ENCODE measurements at regions of chr22 and their contacts with region 1.

Region 1: DNA sequence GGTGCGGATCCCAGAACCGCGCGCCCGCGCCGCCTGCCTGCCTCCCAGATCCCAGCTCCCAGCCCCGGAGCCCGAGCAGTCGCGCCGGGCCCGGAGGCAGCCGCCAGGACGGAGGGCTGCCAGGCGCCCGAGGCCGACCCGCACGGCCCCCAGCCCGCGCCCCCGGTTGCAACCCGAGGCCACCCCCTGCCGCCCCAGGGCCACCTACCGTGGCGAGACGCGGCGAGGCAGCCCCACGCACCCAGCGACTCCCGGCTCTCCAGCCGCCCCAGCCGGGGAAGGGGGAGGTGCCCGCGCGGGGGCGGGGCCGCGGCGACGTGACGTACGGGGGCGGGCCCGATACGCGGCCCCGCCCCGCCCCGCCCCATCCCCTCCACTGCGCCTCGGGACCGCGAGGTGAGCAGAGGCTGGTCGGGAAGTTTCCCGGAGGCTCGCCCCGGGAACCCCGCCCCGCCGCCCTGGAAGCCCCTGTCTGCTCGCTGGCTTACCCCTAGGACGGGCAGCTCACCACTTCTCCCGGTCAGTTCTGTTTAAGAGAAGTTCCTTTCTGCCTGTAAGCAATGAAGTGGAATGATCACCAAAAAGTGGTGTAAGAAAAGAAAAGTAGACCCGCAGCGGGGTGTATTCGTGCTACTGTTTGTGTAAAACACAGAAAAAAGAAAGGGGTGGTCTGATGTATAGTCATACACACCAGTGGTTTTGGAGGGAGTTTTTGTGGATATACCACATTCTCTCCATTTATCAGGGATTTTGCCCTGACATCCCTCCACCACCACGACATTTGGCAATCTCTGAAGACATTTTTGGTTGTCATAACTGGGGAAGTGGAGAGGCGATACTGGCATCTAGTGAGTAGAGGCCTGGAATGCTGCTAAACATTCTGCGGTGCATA is at the start of gene TPST2:
- DNase-seq: peak; percentile 72
- H3K4me3 Mint-ChIP-seq: peak within 1 kb of the TSS; percentile 85
- H3K27ac Mint-ChIP-seq: peak within 1 kb of the TSS; percentile 67
- H3K4me1 Mint-ChIP-seq: peaks cover 49% of the 10 kb centered on the region
- H3K27me3 Mint-ChIP-seq: no peaks in the 10 kb centered on the region
- total RNA-seq, gene TPST2: 21.0 to 21.9 TPM

Region 2: DNA sequence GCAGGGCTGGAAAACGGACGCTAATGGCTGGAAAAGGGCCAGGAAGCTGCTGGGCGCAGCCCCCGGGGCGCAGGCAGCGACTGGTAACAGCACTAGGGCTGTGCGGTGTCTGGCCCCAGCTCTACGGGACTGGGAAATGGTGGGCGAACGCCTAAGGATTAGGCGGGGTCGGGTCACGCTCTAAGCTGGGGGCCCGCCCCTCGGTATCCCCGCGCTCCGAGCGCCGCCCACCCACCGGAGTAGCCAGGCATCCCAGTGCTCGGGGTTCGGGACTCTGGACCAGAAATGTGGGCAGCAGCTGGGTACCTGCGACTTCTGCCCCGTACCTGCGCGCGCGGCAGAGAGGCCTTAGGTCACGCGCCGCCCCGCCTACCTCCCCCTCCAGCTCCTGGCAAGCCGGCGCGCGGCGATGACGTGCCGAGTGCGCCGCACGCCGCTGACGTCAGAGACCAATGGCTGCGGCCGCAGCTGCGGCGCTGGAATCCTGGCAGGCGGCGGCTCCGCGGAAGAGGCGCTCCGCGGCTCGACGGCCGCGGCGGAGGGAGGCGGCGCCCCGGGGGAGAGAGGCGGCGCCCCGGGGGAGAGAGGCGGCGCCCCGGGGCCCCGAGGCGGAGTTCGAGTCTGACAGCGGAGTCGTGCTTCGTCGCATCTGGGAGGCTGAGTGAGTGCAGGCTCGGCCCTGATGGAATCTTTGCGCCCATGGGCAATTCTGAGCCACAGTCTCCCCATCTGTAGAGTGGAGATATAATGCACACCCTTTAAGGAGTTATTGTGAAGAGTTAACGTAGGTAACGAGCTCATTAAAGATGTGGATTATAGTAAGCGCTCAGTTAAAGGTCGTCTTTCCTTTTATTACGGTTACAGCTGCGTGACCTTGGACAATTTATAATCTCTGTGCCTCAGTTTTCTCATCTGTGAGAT is 106.4 kb before region 1 on chr22 and contains the starts of genes HPS4 and SRRD:
- CTCF ChIA-PET with region 1: no interaction called
- intact Hi-C with region 1: loop called (anchors 1 kb)
- DNase-seq: peak; percentile 90
- H3K4me3 Mint-ChIP-seq: peak within 1 kb of the TSS; percentile 82
- H3K27ac Mint-ChIP-seq: peak within 1 kb of the TSS; percentile 84
- H3K4me1 Mint-ChIP-seq: peaks cover 59% of the 10 kb centered on the region
- H3K27me3 Mint-ChIP-seq: no peaks in the 10 kb centered on the region
- total RNA-seq, gene HPS4: 48.0 to 51.5 TPM
- total RNA-seq, gene SRRD: 20.8 to 21.6 TPM

Region 3: GRCh38 chr22:26511857-26512793 is 78.0 kb before region 1 on chr22 and contains the start of gene TFIP11:
- CTCF ChIA-PET with region 1: no interaction called
- intact Hi-C with region 1: loop called (anchors 5 kb)
- DNase-seq: peak; percentile 95
- H3K4me3 Mint-ChIP-seq: peak within 1 kb of the TSS; percentile 93
- H3K27ac Mint-ChIP-seq: peak within 1 kb of the TSS; percentile 80
- H3K4me1 Mint-ChIP-seq: peaks cover 44% of the 10 kb centered on the region
- H3K27me3 Mint-ChIP-seq: no peaks in the 10 kb centered on the region
- total RNA-seq, gene TFIP11: 33.3 to 34.4 TPM

Region 4: GRCh38 chr22:26579331-26579886 is 10.7 kb before region 1 on chr22:
- CTCF ChIA-PET with region 1: interaction called, 3 read pairs
- intact Hi-C with region 1: loop called (anchors 1 kb)
- DNase-seq: peak; percentile 67
- H3K4me3 Mint-ChIP-seq: peak overlapping the region; percentile 57
- H3K27ac Mint-ChIP-seq: peak overlapping the region; percentile 78
- H3K4me1 Mint-ChIP-seq: peaks cover 38% of the 10 kb centered on the region
- H3K27me3 Mint-ChIP-seq: no peaks in the 10 kb centered on the region

Region 5: DNA sequence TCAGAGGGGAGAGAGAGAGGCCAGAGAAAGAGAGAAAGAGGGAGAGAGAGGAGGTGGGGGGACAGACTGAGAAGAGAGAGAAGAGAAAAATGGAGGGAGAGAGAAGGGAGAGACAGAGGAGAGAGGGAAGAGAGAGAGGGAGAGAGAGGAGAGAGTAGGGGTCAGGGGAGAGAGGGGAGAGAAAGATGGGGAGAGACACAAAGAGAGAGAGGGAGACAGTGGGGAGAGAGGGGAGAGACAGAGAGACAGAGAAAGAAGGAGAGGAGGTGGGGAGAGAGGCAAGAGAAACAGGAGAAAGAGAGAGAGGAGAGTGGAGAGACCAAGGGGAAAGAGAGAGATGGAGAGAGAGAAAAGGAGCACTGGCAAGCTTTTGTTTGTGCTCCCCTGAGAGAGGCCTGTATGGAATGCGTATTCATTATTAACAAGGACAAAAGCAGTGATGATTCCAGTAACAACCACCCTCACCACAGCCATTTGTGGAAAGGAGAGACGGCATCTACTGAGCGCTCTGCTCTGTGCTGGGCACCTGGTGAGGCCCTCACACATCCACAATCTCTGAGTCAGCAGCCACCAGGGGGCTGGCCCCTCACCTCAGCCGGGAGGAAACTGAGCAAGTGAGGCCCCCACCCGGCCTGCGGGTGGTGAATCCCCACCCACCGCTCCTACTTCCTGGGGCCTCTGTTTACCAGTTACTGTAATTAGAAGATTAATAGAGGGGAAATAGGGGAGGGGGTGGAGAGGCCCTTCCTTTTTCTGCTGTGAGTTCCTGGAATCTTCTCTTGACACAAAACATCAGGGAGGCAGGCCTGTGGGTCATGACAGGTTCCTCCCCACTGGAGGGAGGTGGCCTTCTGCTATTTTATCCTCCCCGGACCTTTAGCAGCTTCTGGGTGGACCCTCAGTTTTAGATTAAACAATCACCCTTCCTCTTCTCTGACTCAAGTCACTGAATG is 52.6 kb after region 1 on chr22:
- CTCF ChIA-PET with region 1: interaction called, 3 read pairs
- intact Hi-C with region 1: loop called (anchors 1 kb)
- DNase-seq: peak; percentile 96
- H3K4me3 Mint-ChIP-seq: peak overlapping the region; percentile 60
- H3K27ac Mint-ChIP-seq: peak overlapping the region; percentile 95
- H3K4me1 Mint-ChIP-seq: peaks cover 52% of the 10 kb centered on the region
- H3K27me3 Mint-ChIP-seq: peaks cover 8% of the 10 kb centered on the region

Measured in activated naive CD4-positive, alpha-beta T cell treated with anti-CD3 and anti-CD28 coated beads for 36 hours (primary cell).